GM12878 (cell line): ENCODE measurements at regions of chr1 and their contacts with region 1.

Region 1: DNA sequence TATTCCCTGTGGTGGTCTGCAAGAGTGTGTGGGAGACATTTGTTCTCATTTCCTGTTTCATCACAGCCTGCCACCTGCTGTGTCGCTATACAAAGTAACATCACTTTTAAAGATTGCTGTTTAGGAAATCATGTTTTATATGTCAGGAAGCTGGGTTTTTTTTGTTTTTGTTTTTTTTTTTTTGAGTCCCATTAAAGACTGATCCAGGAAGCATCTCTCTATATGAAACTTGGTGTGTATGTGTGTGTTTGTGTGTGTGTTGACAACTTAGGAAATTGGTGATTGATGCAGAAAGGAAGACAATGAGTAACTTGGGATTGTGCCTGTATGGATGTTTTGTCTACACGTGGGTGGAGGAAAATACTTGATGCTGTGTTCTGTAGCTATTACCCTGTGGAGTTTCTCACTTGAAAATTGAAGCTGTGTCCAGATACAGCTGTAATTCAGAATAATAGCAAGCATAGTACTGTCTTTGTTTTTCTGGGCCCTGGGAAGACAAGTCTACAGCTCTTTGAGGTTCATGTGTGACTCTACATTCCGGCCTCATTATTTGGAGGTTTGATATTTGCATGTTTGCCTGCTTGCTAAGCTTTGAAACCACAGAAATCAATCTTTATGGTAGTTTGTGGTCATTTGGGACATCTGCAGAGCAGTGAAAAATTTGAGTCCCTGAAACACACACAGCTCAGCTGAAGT is 47.9 kb downstream of the LAMC1 start:
- DNase-seq: peak; percentile 94
- ATAC-seq: peak; percentile 90
- H3K4me3 ChIP-seq: peak overlapping the region; percentile 64
- H3K27ac ChIP-seq: peak overlapping the region; percentile 82
- H3K4me1 ChIP-seq: peaks cover 27% of the 10 kb centered on the region; the same call in 1 of the 2 replicates
- H3K27me3 ChIP-seq: no peaks in the 10 kb centered on the region
- CTCF ChIP-seq: peak in 1 of 3 experiments; percentile 36; a peak in 2 of 6 replicates
- EP300 ChIP-seq: peak; percentile 66 to 67; a peak in 2 of 4 replicates
- POLR2A ChIP-seq: no peak
- RAD21 ChIP-seq: peak; percentile 32

Region 2: GRCh38 chr1:183000167-183000962 is 70.7 kb before region 1 on chr1:
- CTCF ChIA-PET with region 1: no interaction called
- POLR2A ChIA-PET with region 1: no interaction called
- RAD21 ChIA-PET with region 1: no interaction called
- SMC1A ChIA-PET with region 1: no interaction called
- in situ Hi-C with region 1: no loop called
- intact Hi-C with region 1: no loop called
- DNase-seq: no peak
- ATAC-seq: no peak
- H3K4me3 ChIP-seq: no peak overlapping the region
- H3K27ac ChIP-seq: no peak overlapping the region
- H3K4me1 ChIP-seq: no peaks in the 10 kb centered on the region
- H3K27me3 ChIP-seq: no peaks in the 10 kb centered on the region
- CTCF ChIP-seq: no peak
- EP300 ChIP-seq: no peak
- POLR2A ChIP-seq: no peak
- RAD21 ChIP-seq: no peak

Region 3: DNA sequence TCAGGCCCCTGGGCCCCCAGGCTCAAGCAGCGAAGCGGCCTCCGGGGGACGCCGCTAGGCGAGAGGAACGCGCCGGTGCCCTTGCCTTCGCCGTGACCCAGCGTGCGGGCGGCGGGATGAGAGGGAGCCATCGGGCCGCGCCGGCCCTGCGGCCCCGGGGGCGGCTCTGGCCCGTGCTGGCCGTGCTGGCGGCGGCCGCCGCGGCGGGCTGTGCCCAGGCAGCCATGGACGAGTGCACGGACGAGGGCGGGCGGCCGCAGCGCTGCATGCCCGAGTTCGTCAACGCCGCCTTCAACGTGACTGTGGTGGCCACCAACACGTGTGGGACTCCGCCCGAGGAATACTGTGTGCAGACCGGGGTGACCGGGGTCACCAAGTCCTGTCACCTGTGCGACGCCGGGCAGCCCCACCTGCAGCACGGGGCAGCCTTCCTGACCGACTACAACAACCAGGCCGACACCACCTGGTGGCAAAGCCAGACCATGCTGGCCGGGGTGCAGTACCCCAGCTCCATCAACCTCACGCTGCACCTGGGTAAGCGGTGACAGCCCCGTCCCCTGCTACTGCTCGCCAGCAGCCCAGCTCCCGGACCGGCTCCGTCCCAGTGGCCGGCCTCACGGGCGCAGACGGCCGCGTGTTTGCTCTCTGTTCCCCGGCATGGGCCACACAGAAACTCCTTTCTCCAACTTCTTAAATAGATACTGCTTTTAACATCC is 47.3 kb before region 1 on chr1:
- CTCF ChIA-PET with region 1: interaction called, 58 read pairs
- POLR2A ChIA-PET with region 1: interaction called, 21 read pairs
- RAD21 ChIA-PET with region 1: interaction called, 104 read pairs
- SMC1A ChIA-PET with region 1: interaction called, 92 read pairs
- in situ Hi-C with region 1: no loop called
- intact Hi-C with region 1: loop called (anchors 2 kb)
- DNase-seq: no peak
- ATAC-seq: peak; percentile 77
- H3K4me3 ChIP-seq: peak overlapping the region; percentile 74
- H3K27ac ChIP-seq: peak overlapping the region; percentile 5
- H3K4me1 ChIP-seq: peaks cover 20% of the 10 kb centered on the region
- H3K27me3 ChIP-seq: no peaks in the 10 kb centered on the region
- CTCF ChIP-seq: peak; percentile 64 to 76 (median 68)
- EP300 ChIP-seq: no peak
- POLR2A ChIP-seq: peak; percentile 65
- RAD21 ChIP-seq: peak; percentile 47; the same call in 1 of the 2 replicates

Region 4: DNA sequence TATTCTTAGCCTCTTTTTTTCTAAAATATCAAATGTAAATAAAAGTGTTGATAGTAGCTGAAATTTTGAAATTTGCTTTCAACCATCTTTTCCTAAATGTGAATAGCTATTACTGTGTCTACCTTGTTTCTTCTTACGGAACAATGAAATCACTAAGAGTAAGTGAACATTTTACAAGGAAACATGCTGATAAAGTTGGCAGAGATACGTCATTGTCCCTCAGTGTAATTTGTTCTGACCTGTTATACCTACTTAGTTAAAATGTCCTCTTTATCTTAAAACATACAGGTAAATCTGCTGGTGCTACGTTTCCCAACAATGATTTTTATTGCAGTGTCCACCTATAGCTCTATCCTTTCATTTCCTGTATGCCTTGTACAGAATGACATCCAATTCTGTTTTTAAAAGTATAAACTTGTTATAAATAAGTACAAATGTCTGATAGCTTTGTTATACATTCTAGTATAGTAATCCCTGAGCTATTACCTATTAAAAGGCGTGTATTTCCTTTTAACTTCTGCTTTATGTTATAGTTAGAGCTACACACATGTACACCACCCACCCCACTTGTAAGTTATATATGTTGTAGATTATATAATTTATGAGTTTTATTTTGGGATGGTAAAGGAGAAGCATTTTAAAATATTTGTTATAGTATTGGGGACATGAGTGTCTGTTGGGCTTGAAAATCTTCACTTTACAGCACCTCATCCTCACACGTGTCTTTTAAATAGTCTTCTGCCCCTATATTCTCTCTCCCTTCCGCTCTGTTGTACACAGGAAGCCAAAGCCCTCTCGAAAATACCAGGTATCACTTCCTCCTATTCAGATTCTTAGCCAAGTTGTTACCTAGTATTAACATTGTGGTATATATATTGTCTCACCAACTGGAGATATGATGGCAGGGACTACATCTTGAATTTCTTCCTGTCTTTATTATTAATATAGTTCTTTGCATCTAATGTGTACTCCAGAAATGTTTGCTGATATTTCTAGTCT is 22.7 kb before region 1 on chr1:
- CTCF ChIA-PET with region 1: interaction called, 12 read pairs
- POLR2A ChIA-PET with region 1: interaction called, 5 read pairs
- RAD21 ChIA-PET with region 1: interaction called, 64 read pairs
- SMC1A ChIA-PET with region 1: interaction called, 74 read pairs
- in situ Hi-C with region 1: no loop called
- intact Hi-C with region 1: no loop called
- DNase-seq: peak; percentile 78
- ATAC-seq: peak; percentile 98
- H3K4me3 ChIP-seq: no peak overlapping the region
- H3K27ac ChIP-seq: peak overlapping the region; percentile 46
- H3K4me1 ChIP-seq: peaks cover 29% of the 10 kb centered on the region
- H3K27me3 ChIP-seq: no peaks in the 10 kb centered on the region
- CTCF ChIP-seq: no peak
- EP300 ChIP-seq: peak in 1 of 2 experiments; percentile 61; a peak in 1 of 4 replicates
- POLR2A ChIP-seq: no peak
- RAD21 ChIP-seq: no peak

Region 5: DNA sequence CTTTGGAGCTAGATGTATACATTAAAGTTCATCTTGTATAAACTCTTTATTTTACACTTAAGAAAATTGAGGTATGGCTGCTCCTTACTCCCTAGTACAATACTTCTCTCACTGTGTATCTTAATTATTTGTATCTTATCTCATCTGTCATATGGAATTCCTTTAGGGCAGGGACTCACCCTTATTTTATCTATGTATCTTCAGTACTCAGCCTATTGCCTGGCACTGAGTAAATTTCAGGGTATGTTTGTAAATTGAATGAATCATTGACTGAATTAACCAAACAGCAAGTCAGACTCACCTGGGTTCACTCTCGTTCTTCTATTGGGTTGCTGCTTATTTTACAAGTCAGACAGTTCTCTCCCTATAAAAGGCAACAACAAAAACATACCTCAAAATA is 15.9 kb after region 1 on chr1:
- CTCF ChIA-PET with region 1: interaction called, 5 read pairs
- POLR2A ChIA-PET with region 1: interaction called, 4 read pairs
- RAD21 ChIA-PET with region 1: interaction called, 3 read pairs
- SMC1A ChIA-PET with region 1: interaction called, 20 read pairs
- in situ Hi-C with region 1: no loop called
- intact Hi-C with region 1: no loop called
- DNase-seq: no peak
- ATAC-seq: no peak
- H3K4me3 ChIP-seq: no peak overlapping the region
- H3K27ac ChIP-seq: no peak overlapping the region
- H3K4me1 ChIP-seq: peaks cover 12% of the 10 kb centered on the region; the same call in 1 of the 2 replicates
- H3K27me3 ChIP-seq: no peaks in the 10 kb centered on the region
- CTCF ChIP-seq: no peak
- EP300 ChIP-seq: no peak
- POLR2A ChIP-seq: no peak
- RAD21 ChIP-seq: no peak

Region 6: GRCh38 chr1:183227963-183228649 is 157.0 kb after region 1 on chr1:
- CTCF ChIA-PET with region 1: interaction called, 15 read pairs
- POLR2A ChIA-PET with region 1: interaction called, 3 read pairs
- RAD21 ChIA-PET with region 1: interaction called, 15 read pairs
- SMC1A ChIA-PET with region 1: interaction called, 15 read pairs
- in situ Hi-C with region 1: no loop called
- intact Hi-C with region 1: no loop called
- DNase-seq: no peak
- ATAC-seq: peak; percentile 96
- H3K4me3 ChIP-seq: no peak overlapping the region
- H3K27ac ChIP-seq: no peak overlapping the region
- H3K4me1 ChIP-seq: peaks cover 6% of the 10 kb centered on the region; the same call in 1 of the 2 replicates
- H3K27me3 ChIP-seq: no peaks in the 10 kb centered on the region
- CTCF ChIP-seq: peak; percentile 80 to 90 (median 86)
- EP300 ChIP-seq: no peak
- POLR2A ChIP-seq: no peak
- RAD21 ChIP-seq: peak; percentile 87

Region 7: GRCh38 chr1:183368202-183369108 is 297.4 kb after region 1 on chr1:
- CTCF ChIA-PET with region 1: no interaction called
- POLR2A ChIA-PET with region 1: no interaction called
- RAD21 ChIA-PET with region 1: no interaction called
- SMC1A ChIA-PET with region 1: no interaction called
- in situ Hi-C with region 1: no loop called
- intact Hi-C with region 1: no loop called
- DNase-seq: no peak
- ATAC-seq: peak; percentile 32; the same call in 1 of the 3 replicates
- H3K4me3 ChIP-seq: no peak overlapping the region
- H3K27ac ChIP-seq: no peak overlapping the region
- H3K4me1 ChIP-seq: no peaks in the 10 kb centered on the region
- H3K27me3 ChIP-seq: peaks cover 0 to 2% of the 10 kb centered on the region in 2 experiments; a peak in 2 of 4 replicates
- CTCF ChIP-seq: no peak
- EP300 ChIP-seq: no peak
- POLR2A ChIP-seq: no peak
- RAD21 ChIP-seq: no peak